ENCODE measurements at regions of chr14 and their contacts with region 1.

Region 1: GRCh38 chr14:72904840-72905561 is 11.1 kb upstream of the DPF3 start:
- DNase-seq: peak; percentile 57 to 72 (median 65)
- H3K4me3 ChIP-seq: no peak overlapping the region
- H3K4me3 Mint-ChIP-seq: no peak overlapping the region
- H3K27ac ChIP-seq: no peak overlapping the region
- H3K27ac Mint-ChIP-seq: peak overlapping the region in 2 of 7 donors; percentile 4 to 58
- H3K4me1 ChIP-seq: no peaks in the 10 kb centered on the region
- H3K4me1 Mint-ChIP-seq: peaks cover 0 to 6% (median 3%) of the 10 kb centered on the region in 4 donors
- H3K27me3 ChIP-seq: no peaks in the 10 kb centered on the region
- H3K27me3 Mint-ChIP-seq: peaks cover 0 to 8% of the 10 kb centered on the region in 2 donors

Region 2: GRCh38 chr14:72023722-72024407 is 881.1 kb before region 1 on chr14:
- CTCF ChIA-PET with region 1: interaction called, 18 read pairs
- POLR2A ChIA-PET with region 1: no interaction called
- intact Hi-C with region 1: no loop called
- DNase-seq: peak; percentile 9 to 40 (median 20)
- H3K4me3 ChIP-seq: no peak overlapping the region
- H3K4me3 Mint-ChIP-seq: no peak overlapping the region
- H3K27ac ChIP-seq: no peak overlapping the region
- H3K27ac Mint-ChIP-seq: no peak overlapping the region
- H3K4me1 ChIP-seq: no peaks in the 10 kb centered on the region
- H3K4me1 Mint-ChIP-seq: no peaks in the 10 kb centered on the region
- H3K27me3 ChIP-seq: no peaks in the 10 kb centered on the region
- H3K27me3 Mint-ChIP-seq: peaks cover 22 to 27% of the 10 kb centered on the region in 2 donors

Region 3: DNA sequence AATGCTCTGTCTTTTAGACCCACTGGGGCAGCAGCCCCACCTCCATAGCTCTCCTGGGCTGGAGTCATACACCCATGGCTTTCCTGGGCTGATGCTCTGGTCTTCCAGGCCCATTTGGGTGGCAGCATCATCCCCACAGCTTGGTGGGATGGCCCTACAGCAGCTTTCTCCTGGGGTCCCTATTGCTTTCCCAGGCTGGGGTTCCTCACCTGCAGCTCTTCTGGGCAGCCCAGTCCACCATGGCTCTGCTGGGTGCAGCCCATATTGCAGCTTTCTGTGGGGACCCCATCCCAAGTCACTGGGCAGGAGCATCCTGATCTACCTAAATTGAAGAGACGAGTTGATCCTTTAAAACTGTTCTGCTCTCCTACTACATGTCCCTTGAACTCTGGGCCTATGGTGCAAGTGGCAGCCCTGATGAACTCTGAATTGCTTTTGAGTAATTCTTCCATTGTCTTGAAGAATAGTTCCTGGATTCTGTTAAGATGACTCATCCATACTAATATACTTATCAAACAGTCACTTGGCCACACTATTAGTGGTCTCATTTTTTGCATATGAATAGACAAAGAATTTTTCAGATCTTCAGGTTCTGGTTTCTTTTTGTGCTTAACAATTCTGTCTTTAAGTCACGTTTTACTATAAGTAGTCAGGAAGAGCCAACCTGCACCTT is 401.2 kb before region 1 on chr14:
- CTCF ChIA-PET with region 1: interaction called, 13 read pairs
- POLR2A ChIA-PET with region 1: no interaction called
- intact Hi-C with region 1: no loop called
- DNase-seq: no peak
- H3K4me3 ChIP-seq: no peak overlapping the region
- H3K4me3 Mint-ChIP-seq: no peak overlapping the region
- H3K27ac ChIP-seq: no peak overlapping the region
- H3K27ac Mint-ChIP-seq: no peak overlapping the region
- H3K4me1 ChIP-seq: no peaks in the 10 kb centered on the region
- H3K4me1 Mint-ChIP-seq: no peaks in the 10 kb centered on the region
- H3K27me3 ChIP-seq: no peaks in the 10 kb centered on the region
- H3K27me3 Mint-ChIP-seq: no peaks in the 10 kb centered on the region

Region 4: GRCh38 chr14:72893636-72894321 is 11.2 kb before region 1 on chr14 and contains the start of gene DPF3:
- CTCF ChIA-PET with region 1: interaction called, 67 read pairs
- POLR2A ChIA-PET with region 1: interaction called, 4 read pairs
- intact Hi-C with region 1: loop called (anchors 1 kb)
- DNase-seq: peak; percentile 88 to 93 (median 89)
- H3K4me3 ChIP-seq: peak within 1 kb of the TSS; percentile 78 to 79
- H3K4me3 Mint-ChIP-seq: peak within 1 kb of the TSS; percentile 94 to 99 (median 96)
- H3K27ac ChIP-seq: peak within 1 kb of the TSS; percentile 33
- H3K27ac Mint-ChIP-seq: peak within 1 kb of the TSS; percentile 79 to 91 (median 87)
- H3K4me1 ChIP-seq: peaks cover 27% of the 10 kb centered on the region
- H3K4me1 Mint-ChIP-seq: peaks cover 12 to 29% (median 22%) of the 10 kb centered on the region in 4 donors
- H3K27me3 ChIP-seq: peaks cover 9% of the 10 kb centered on the region
- H3K27me3 Mint-ChIP-seq: peaks cover 26 to 39% of the 10 kb centered on the region in 2 donors
- total RNA-seq, gene DPF3: 0.35 TPM in 1 of 2 experiments, not detected in the other

Region 5: GRCh38 chr14:72920015-72920414 is 15.0 kb after region 1 on chr14:
- CTCF ChIA-PET with region 1: interaction called, 14 read pairs
- POLR2A ChIA-PET with region 1: no interaction called
- intact Hi-C with region 1: no loop called
- DNase-seq: no peak
- H3K4me3 ChIP-seq: no peak overlapping the region
- H3K4me3 Mint-ChIP-seq: no peak overlapping the region
- H3K27ac ChIP-seq: no peak overlapping the region
- H3K27ac Mint-ChIP-seq: no peak overlapping the region
- H3K4me1 ChIP-seq: no peaks in the 10 kb centered on the region
- H3K4me1 Mint-ChIP-seq: no peaks in the 10 kb centered on the region
- H3K27me3 ChIP-seq: no peaks in the 10 kb centered on the region
- H3K27me3 Mint-ChIP-seq: peaks cover 2 to 11% of the 10 kb centered on the region in 2 donors

Region 6: DNA sequence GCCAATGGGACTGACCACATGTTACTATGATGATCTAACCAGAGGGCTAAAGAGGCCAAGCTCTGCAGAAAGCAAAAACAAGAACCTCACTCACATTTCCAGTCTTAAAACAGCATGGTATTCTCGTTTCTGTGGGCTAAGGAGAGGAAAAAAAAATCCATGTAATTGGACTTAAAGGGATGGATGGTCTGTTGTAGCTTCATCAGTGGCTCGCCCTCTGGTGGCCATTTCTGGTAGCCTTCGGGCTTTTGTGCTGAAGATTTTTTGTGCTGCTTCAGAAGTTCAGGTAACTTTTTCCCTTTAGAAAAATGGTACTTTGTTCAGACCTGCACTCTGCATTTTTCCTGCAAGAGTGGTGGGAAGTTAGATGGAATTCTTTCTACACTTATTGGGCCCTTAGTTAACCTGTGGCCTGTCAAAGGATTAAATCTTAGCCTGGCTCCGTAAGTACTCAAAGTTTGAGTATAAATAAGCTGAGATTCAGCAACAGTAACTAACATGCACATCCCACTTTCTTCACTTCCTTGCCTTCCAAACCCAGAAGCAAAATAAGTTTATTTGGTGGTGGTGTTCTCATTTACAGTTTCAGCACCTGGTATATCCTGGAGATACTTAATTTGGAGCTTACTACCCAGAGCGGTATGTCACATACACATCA is 43.6 kb after region 1 on chr14:
- CTCF ChIA-PET with region 1: interaction called, 24 read pairs
- POLR2A ChIA-PET with region 1: no interaction called
- intact Hi-C with region 1: no loop called
- DNase-seq: peak in 4 of 5 donors; percentile 35 to 51 (median 40)
- H3K4me3 ChIP-seq: no peak overlapping the region
- H3K4me3 Mint-ChIP-seq: no peak overlapping the region
- H3K27ac ChIP-seq: no peak overlapping the region
- H3K27ac Mint-ChIP-seq: peak overlapping the region in 1 of 7 donors; percentile 73
- H3K4me1 ChIP-seq: no peaks in the 10 kb centered on the region
- H3K4me1 Mint-ChIP-seq: peaks cover 0 to 4% (median 2%) of the 10 kb centered on the region in 4 donors
- H3K27me3 ChIP-seq: no peaks in the 10 kb centered on the region
- H3K27me3 Mint-ChIP-seq: no peaks in the 10 kb centered on the region